ENCODE measurements at regions of chr11 and their contacts with region 1.

Region 1: DNA sequence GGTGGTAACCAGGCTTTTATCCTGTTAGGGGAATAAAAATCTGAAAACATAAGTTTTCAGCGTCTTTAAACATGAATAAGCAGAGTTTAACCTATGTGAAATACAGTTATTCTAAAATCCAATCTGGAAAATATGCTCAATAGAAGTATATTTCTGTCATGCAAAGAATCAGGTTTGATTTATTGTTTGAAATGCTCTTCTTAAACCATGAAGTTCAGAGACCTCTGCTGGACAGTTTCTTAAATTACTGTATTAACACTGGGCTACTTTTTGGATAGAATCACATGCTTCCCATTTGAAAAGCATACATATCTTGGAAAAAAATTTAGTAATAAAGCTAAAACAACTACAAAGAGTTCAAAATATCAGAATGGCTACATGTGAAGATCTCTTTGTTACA is 25.4 kb downstream of the APIP start:
- DNase-seq: no peak
- ATAC-seq: no peak

Region 2: GRCh38 chr11:34512840-34513681 is 377.8 kb before region 1 on chr11:
- intact Hi-C with region 1: loop called (anchors 5 kb)
- DNase-seq: peak; percentile 46
- ATAC-seq: peak; percentile 82

Region 3: GRCh38 chr11:34585735-34586487 is 304.9 kb before region 1 on chr11:
- intact Hi-C with region 1: loop called (anchors 2 kb)
- DNase-seq: no peak
- ATAC-seq: peak; percentile 68

Region 4: DNA sequence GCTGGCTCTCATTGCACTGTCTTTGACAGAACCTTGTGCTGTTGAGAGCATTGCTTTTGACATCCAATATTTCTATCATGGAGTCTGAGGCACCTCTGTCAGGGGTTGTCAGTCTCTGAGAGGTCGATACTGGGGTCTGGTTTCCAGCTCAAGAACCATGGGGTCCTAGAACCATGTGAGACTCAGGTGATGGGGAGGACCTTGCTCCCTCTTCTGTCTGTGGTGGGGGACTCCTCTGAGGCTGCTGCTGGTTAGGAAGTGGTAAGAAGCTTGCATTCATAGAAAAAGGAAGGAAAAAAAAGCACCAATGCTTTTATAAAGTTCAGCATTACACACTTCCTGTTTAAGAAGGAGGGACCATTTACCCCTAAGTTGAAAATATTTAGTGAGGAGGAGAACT is 156.4 kb after region 1 on chr11:
- intact Hi-C with region 1: no loop called
- DNase-seq: no peak
- ATAC-seq: peak; percentile 36